CD4-positive, alpha-beta memory T cell (primary cell): ENCODE measurements at regions of chr16 and their contacts with region 1.

Region 1: GRCh38 chr16:4402439-4403132 is 13.8 kb downstream of the CORO7 start:
- DNase-seq: peak; percentile 51 to 63 (median 60)
- H3K4me3 ChIP-seq: no peak overlapping the region
- H3K4me3 Mint-ChIP-seq: peak overlapping the region in 1 of 8 donors; percentile 36
- H3K27ac ChIP-seq: no peak overlapping the region
- H3K27ac Mint-ChIP-seq: peak overlapping the region in 3 of 7 donors; percentile 41 to 87 (median 56)
- H3K4me1 ChIP-seq: no peaks in the 10 kb centered on the region
- H3K4me1 Mint-ChIP-seq: peaks cover 19 to 36% (median 24%) of the 10 kb centered on the region in 4 donors
- H3K27me3 ChIP-seq: no peaks in the 10 kb centered on the region
- H3K27me3 Mint-ChIP-seq: no peaks in the 10 kb centered on the region

Region 2: GRCh38 chr16:4358831-4359561 is 43.6 kb before region 1 on chr16:
- CTCF ChIA-PET with region 1: interaction called, 20 read pairs
- POLR2A ChIA-PET with region 1: no interaction called
- intact Hi-C with region 1: loop called (anchors 1 kb)
- DNase-seq: peak in 4 of 5 donors; percentile 49 to 60 (median 58)
- H3K4me3 ChIP-seq: no peak overlapping the region
- H3K4me3 Mint-ChIP-seq: no peak overlapping the region
- H3K27ac ChIP-seq: no peak overlapping the region
- H3K27ac Mint-ChIP-seq: peak overlapping the region; percentile 68 to 92 (median 81)
- H3K4me1 ChIP-seq: no peaks in the 10 kb centered on the region
- H3K4me1 Mint-ChIP-seq: peaks cover 0 to 3% (median under 1%) of the 10 kb centered on the region in 4 donors
- H3K27me3 ChIP-seq: no peaks in the 10 kb centered on the region
- H3K27me3 Mint-ChIP-seq: no peaks in the 10 kb centered on the region

Region 3: GRCh38 chr16:4461250-4462085 is 58.9 kb after region 1 on chr16:
- CTCF ChIA-PET with region 1: interaction called, 13 read pairs
- POLR2A ChIA-PET with region 1: interaction called, 3 read pairs
- intact Hi-C with region 1: no loop called
- DNase-seq: no peak
- H3K4me3 ChIP-seq: no peak overlapping the region
- H3K4me3 Mint-ChIP-seq: no peak overlapping the region
- H3K27ac ChIP-seq: no peak overlapping the region
- H3K27ac Mint-ChIP-seq: peak overlapping the region in 4 of 7 donors; percentile 42 to 85 (median 54)
- H3K4me1 ChIP-seq: peaks cover 31% of the 10 kb centered on the region
- H3K4me1 Mint-ChIP-seq: peaks cover 21 to 43% (median 21%) of the 10 kb centered on the region in 4 donors
- H3K27me3 ChIP-seq: no peaks in the 10 kb centered on the region
- H3K27me3 Mint-ChIP-seq: no peaks in the 10 kb centered on the region

Region 4: DNA sequence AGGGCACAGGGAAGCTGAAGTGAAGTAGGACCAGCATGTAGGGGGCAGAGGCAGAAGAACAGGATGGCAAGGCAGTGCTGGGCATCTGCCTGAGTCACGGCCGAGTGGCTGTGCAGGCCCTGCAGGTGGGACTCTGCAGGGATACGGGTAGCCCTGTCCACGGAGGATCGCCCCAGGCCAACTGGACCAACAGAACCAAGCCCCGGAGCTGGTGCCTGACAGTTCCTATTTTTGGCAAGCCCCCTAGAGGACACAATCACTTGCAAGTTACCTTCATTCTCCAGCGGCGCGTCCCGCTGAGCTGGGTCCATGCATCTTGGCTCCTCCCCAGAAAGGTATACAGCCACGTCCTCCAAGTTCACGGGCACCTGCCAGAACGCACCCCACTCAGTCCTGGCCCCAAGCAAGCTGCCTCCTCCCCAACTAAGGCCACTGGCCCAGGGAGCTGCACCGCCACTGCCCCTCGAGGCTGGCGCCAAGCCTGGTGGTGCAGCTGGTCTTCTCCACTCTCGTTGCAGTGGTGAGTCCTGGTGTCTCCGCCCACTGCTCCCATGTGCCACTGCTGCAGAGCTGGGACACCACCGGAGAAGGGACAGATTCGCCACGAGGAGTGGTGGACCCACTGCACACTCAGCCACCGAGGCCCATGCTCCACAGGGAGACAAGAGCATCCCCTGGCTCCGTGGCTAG is 357.8 kb after region 1 on chr16:
- CTCF ChIA-PET with region 1: no interaction called
- POLR2A ChIA-PET with region 1: no interaction called
- intact Hi-C with region 1: no loop called
- DNase-seq: no peak
- H3K4me3 ChIP-seq: no peak overlapping the region
- H3K4me3 Mint-ChIP-seq: no peak overlapping the region
- H3K27ac ChIP-seq: no peak overlapping the region
- H3K27ac Mint-ChIP-seq: peak overlapping the region in 1 of 7 donors; percentile 75
- H3K4me1 ChIP-seq: peaks cover 4% of the 10 kb centered on the region
- H3K4me1 Mint-ChIP-seq: peaks cover 1 to 18% (median 4%) of the 10 kb centered on the region in 4 donors
- H3K27me3 ChIP-seq: no peaks in the 10 kb centered on the region
- H3K27me3 Mint-ChIP-seq: no peaks in the 10 kb centered on the region